AG04450 (cell line): ENCODE measurements at regions of chr9 and their contacts with region 1.

Region 1: DNA sequence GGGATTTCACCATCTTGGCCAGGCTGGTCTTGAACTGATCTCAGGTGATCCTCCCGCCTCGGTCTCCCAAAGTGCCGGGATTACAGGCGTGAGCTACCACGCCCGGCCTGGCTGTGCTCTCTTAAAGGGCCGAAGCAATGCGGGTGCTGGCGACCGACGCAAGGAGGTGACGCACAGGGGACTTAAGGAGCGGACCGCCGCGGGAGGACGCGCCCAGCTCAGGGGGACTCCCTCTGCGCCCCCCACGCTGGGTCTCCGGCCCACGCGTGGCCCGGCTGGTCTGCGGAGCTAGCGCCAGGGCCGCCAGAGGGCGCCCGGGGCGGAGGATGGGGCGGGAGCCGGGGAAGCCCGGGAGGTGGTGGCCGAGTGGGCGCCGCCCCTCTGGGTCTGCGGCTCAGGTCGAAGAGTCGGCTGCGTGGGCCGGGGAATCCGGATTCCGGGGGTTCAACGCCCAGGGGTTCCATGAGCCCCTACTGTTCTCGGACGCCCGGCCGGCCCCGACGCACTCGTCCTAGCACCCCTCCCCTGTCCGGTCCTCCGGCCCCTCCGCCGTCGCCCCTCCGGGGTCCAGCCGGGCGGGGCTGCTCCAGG is 502 bp upstream of the CERCAM start:
- DNase-seq: no peak
- H3K4me3 ChIP-seq: peak overlapping the region; percentile 73
- H3K27ac ChIP-seq: no peak overlapping the region
- H3K27me3 ChIP-seq: peaks cover 8% of the 10 kb centered on the region
- CTCF ChIP-seq: peak; percentile 72

Region 2: GRCh38 chr9:128296337-128297220 is 123.6 kb before region 1 on chr9:
- CTCF ChIA-PET with region 1: interaction called, 11 read pairs
- POLR2A ChIA-PET with region 1: no interaction called
- DNase-seq: no peak
- H3K4me3 ChIP-seq: no peak overlapping the region
- H3K27ac ChIP-seq: no peak overlapping the region
- H3K27me3 ChIP-seq: no peaks in the 10 kb centered on the region
- CTCF ChIP-seq: no peak

Region 3: GRCh38 chr9:128361986-128362646 is 58.0 kb before region 1 on chr9:
- CTCF ChIA-PET with region 1: interaction called, 19 read pairs
- POLR2A ChIA-PET with region 1: interaction called, 4 read pairs
- DNase-seq: peak; percentile 64
- H3K4me3 ChIP-seq: peak overlapping the region; percentile 59
- H3K27ac ChIP-seq: peak overlapping the region; percentile 39
- H3K27me3 ChIP-seq: no peaks in the 10 kb centered on the region
- CTCF ChIP-seq: peak; percentile 91

Region 4: DNA sequence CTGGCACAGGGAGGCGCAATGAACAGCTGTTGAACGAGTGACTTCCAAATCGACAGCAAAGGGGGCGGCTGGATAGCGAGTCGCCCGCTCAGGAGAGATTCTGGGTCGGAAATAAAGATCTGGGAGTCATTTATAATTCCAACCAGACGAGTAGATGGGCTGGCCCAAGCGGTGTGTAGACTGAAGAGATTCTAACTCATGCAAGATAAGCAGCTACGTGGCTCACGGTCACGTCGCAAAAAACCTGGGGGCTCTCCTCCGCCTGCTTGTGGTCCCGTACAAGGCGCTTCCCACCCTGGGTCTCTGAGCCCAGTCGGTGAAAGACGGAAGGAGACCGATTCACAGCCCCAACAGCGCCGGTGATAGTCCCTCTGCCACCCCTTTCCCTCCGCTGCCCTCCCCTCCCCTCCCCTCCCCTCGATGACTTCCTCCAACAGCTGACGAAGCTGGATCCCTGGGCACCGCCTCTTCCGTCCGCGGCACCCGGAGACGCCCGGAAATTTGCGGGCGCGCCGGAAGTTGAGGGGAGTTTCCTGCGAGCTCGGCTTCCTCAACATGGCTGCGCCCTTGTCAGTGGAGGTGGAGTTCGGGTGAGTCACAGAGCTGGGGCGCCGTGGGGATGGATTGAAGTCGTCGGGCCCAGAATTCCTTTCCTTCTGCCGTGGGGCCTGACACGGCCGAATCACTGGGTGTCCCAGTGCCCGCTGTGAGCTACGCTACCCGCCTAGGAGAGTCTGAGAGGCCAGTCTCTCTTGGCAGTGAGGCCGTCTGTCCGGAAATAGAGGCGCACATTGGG is 49.1 kb before region 1 on chr9 and contains the start of gene URM1:
- CTCF ChIA-PET with region 1: interaction called, 5 read pairs
- POLR2A ChIA-PET with region 1: interaction called, 10 read pairs
- DNase-seq: peak; percentile 88
- H3K4me3 ChIP-seq: peak within 1 kb of the TSS; percentile 100
- H3K27ac ChIP-seq: peak within 1 kb of the TSS; percentile 95
- H3K27me3 ChIP-seq: no peaks in the 10 kb centered on the region
- CTCF ChIP-seq: no peak
- polyA plus RNA-seq, gene URM1: 44.7 and 65.1 TPM in 2 replicates

Region 5: GRCh38 chr9:128406848-128407391 is 13.2 kb before region 1 on chr9:
- CTCF ChIA-PET with region 1: interaction called, 23 read pairs
- POLR2A ChIA-PET with region 1: no interaction called
- DNase-seq: no peak
- H3K4me3 ChIP-seq: no peak overlapping the region
- H3K27ac ChIP-seq: no peak overlapping the region
- H3K27me3 ChIP-seq: peaks cover 10% of the 10 kb centered on the region
- CTCF ChIP-seq: no peak

Region 6: GRCh38 chr9:128438343-128439109 is 18.4 kb after region 1 on chr9:
- CTCF ChIA-PET with region 1: interaction called, 30 read pairs
- POLR2A ChIA-PET with region 1: no interaction called
- DNase-seq: peak; percentile 56
- H3K4me3 ChIP-seq: no peak overlapping the region
- H3K27ac ChIP-seq: no peak overlapping the region
- H3K27me3 ChIP-seq: no peaks in the 10 kb centered on the region
- CTCF ChIP-seq: peak; percentile 94